ENCODE measurements at regions of chr6 and their contacts with region 1.

Region 1: GRCh38 chr6:108835218-108835850 is 12.9 kb upstream of the ARMC2 start:
- DNase-seq: peak; percentile 86 to 93 (median 90)
- H3K4me3 ChIP-seq: peak overlapping the region in 7 of 59 donors; percentile 2 to 31 (median 9)
- H3K27ac ChIP-seq: peak overlapping the region in 28 of 59 donors; percentile 3 to 70 (median 41)
- H3K27me3 ChIP-seq: no peaks in the 10 kb centered on the region
- CTCF ChIP-seq: peak; percentile 89 to 99 (median 96)

Region 2: GRCh38 chr6:108699290-108700041 is 135.9 kb before region 1 on chr6:
- intact Hi-C with region 1: no loop called
- DNase-seq: no peak
- H3K4me3 ChIP-seq: no peak overlapping the region
- H3K27ac ChIP-seq: no peak overlapping the region
- H3K27me3 ChIP-seq: no peaks in the 10 kb centered on the region
- CTCF ChIP-seq: no peak

Region 3: DNA sequence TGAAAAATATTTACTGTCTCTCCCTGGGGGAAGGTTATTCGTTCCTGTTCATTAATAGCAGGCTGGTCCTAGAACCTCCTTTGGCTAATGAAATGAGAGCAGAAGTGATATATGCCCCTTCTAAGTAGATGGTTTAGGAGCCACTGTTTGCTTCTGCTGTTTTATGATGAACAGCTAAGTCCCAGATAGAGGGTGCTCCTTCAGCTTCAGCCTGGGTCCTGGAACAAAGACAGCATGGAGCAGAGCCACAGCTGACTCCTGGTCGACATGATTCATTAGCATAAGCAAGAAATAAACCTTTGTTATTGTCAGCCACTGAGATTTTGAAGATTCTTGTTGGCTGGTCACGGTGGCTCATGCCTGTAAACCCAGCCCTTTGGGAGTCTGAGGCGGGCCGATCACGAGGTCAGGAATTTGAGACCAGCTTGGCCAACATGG is 34.9 kb before region 1 on chr6:
- intact Hi-C with region 1: loop called in 1 of 2 experiments (anchors 5 kb)
- DNase-seq: peak; percentile 33 to 83 (median 60)
- H3K4me3 ChIP-seq: peak overlapping the region in 20 of 59 donors; percentile 0 to 48 (median 11)
- H3K27ac ChIP-seq: peak overlapping the region in 47 of 59 donors; percentile 7 to 86 (median 68)
- H3K27me3 ChIP-seq: no peaks in the 10 kb centered on the region
- CTCF ChIP-seq: peak in 36 of 56 donors; percentile 9 to 61 (median 30)

Region 4: DNA sequence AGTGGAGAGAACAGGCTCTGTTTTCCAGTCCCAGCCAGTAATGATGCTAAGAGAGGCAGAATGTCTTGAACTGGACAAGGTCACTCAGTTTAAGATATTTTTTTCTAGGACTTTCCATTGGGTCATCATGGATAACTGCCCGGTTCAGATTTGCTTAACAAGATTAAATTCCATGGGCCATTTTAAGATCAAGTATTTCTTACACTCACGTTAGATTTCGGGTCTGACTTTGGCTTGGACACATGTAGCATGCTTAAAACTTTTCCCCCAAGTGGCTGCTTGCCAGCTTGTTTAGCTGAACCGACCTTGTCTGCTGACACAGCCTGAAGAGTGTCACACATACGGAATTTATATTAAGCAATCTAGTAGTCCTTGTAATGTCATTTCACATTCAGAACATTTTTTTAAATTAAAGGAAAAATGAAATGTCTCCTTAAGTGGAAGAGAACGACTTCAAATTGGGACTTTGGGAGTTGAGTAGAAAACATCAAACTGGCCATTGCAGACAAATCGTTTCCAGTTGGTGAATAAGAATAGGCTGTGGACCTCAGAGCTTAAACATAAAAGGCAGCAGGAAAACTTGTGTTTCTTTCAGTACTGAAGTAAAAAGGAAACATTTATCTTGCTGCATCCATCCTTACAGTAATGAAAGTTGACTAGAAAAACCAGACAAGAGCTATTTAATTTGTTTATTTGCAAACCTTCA is 41.9 kb after region 1 on chr6:
- intact Hi-C with region 1: no loop called
- DNase-seq: no peak
- H3K4me3 ChIP-seq: no peak overlapping the region
- H3K27ac ChIP-seq: peak overlapping the region in 35 of 59 donors; percentile 1 to 66 (median 37)
- H3K27me3 ChIP-seq: no peaks in the 10 kb centered on the region
- CTCF ChIP-seq: no peak

Region 5: GRCh38 chr6:109073344-109074132 is 238.2 kb after region 1 on chr6:
- intact Hi-C with region 1: loop called in 1 of 2 experiments (anchors 5 kb)
- DNase-seq: peak in 2 of 10 donors; percentile 45 to 48
- H3K4me3 ChIP-seq: peak overlapping the region in 8 of 59 donors; percentile 3 to 30 (median 6)
- H3K27ac ChIP-seq: peak overlapping the region in 1 of 59 donors; percentile 39
- H3K27me3 ChIP-seq: no peaks in the 10 kb centered on the region
- CTCF ChIP-seq: peak; percentile 60 to 91 (median 75)

Region 6: DNA sequence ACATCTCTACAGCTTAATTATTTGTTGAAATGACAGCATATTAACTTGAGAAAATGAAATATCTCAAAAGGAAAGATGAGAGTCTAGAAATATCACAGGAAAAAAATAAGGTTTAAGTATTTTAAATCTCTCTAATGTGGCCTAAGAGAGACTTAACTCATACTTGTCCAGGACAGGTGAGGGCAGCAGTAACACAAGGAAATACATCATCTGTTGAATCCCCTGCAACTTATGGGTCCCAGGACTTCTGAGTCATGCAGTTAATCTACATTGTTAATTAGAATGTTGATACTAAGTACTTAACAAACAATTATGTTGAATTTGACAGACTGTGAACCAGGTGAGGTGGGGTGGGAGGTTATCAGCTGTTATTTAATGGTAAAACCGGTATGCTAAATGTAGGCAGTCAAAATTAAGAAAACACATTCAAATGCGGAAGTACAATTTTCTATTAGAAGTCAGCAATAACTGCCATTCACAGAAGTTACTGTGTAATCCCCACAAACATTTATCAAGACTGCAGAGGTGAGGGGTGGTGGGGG is 347.8 kb after region 1 on chr6:
- intact Hi-C with region 1: no loop called
- DNase-seq: no peak
- H3K4me3 ChIP-seq: peak overlapping the region in 2 of 59 donors; percentile 21 to 36
- H3K27ac ChIP-seq: peak overlapping the region in 38 of 59 donors; percentile 6 to 87 (median 72)
- H3K27me3 ChIP-seq: peaks cover 0 to 21% (median 0%) of the 10 kb centered on the region in 45 donors
- CTCF ChIP-seq: no peak

Measured in dorsolateral prefrontal cortex (tissue), 120 donors.